Dendritic cell treated with granulocyte-macrophage colony-stimulating factor and Interleukin-4, amounts not matched to agents 40 ng/mL and 50 ng/mL, for 4 days (primary cell): ENCODE measurements at regions of chr11 and their contacts with region 1.

Region 1: GRCh38 chr11:103091801-103092524 is at the start of gene DCUN1D5:
- H3K4me3 Mint-ChIP-seq: peak within 1 kb of the TSS; percentile 91
- H3K27ac Mint-ChIP-seq: peak within 1 kb of the TSS; percentile 89
- H3K4me1 Mint-ChIP-seq: peaks cover 13% of the 10 kb centered on the region
- H3K27me3 Mint-ChIP-seq: peaks cover 29% of the 10 kb centered on the region

Region 2: DNA sequence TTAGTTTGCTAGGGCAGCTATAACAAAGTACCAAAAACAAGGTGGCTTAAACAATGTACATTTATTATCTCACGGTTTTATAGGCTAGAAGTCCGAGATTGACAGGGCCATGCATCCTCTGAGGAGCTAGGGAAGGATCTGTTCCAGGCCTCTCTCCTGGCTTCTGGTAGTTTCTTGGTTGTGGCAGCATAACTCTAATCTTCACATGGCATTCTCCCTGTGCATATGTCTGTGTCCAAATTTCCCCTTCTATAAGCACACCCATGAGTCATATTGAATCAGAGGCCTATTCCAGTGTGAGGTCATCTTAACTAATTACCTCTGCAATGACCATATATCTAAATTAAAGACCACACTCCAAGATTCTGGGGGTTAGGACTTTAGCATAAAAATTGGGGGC is 105.1 kb before region 1 on chr11:
- intact Hi-C with region 1: no loop called
- H3K4me3 Mint-ChIP-seq: no peak overlapping the region
- H3K27ac Mint-ChIP-seq: no peak overlapping the region
- H3K4me1 Mint-ChIP-seq: no peaks in the 10 kb centered on the region
- H3K27me3 Mint-ChIP-seq: peaks cover 12% of the 10 kb centered on the region

Region 3: GRCh38 chr11:103108933-103109817 is 17.2 kb after region 1 on chr11 and contains the start of gene DYNC2H1:
- intact Hi-C with region 1: loop called (anchors 1 kb)
- H3K4me3 Mint-ChIP-seq: peak within 1 kb of the TSS; percentile 97
- H3K27ac Mint-ChIP-seq: peak within 1 kb of the TSS; percentile 88
- H3K4me1 Mint-ChIP-seq: no peaks in the 10 kb centered on the region
- H3K27me3 Mint-ChIP-seq: peaks cover 12% of the 10 kb centered on the region

Region 4: GRCh38 chr11:103125462-103125861 is 33.5 kb after region 1 on chr11:
- intact Hi-C with region 1: no loop called
- H3K4me3 Mint-ChIP-seq: no peak overlapping the region
- H3K27ac Mint-ChIP-seq: no peak overlapping the region
- H3K4me1 Mint-ChIP-seq: no peaks in the 10 kb centered on the region
- H3K27me3 Mint-ChIP-seq: no peaks in the 10 kb centered on the region